ENCODE measurements at regions of chr16 and their contacts with region 1.

Region 1: GRCh38 chr16:13587176-13587575 is 332.8 kb upstream of the ERCC4 start:
- DNase-seq: no peak
- ATAC-seq: no peak
- H3K4me3 ChIP-seq: no peak overlapping the region
- H3K27ac ChIP-seq: no peak overlapping the region
- H3K4me1 ChIP-seq: no peaks in the 10 kb centered on the region
- H3K27me3 ChIP-seq: no peaks in the 10 kb centered on the region; the same call in 1 of the 2 replicates
- CTCF ChIP-seq: no peak

Region 2: DNA sequence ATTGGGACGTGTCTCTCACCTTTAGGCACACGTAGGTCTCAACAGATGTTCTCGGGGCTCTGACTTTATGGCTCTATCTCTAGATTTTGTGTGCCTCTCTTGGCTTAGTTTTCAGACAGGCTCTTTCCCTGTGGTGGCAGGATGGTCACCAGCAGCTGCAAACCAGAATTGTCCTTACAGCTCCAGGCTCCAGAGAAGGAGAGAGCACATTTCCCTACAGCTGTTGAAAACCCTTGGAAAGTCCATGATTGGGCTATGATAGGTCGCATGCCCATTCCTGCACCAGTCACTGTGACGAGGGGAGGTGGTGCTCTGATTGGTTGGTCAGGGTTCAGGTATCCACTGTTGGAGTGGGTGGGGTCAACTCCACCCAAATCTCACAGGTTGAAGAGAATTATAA is 644.3 kb before region 1 on chr16:
- CTCF ChIA-PET with region 1: no interaction called
- POLR2A ChIA-PET with region 1: interaction called, 16 read pairs
- in situ Hi-C with region 1: no loop called
- intact Hi-C with region 1: no loop called
- DNase-seq: no peak
- ATAC-seq: no peak
- H3K4me3 ChIP-seq: no peak overlapping the region
- H3K27ac ChIP-seq: no peak overlapping the region
- H3K4me1 ChIP-seq: no peaks in the 10 kb centered on the region
- H3K27me3 ChIP-seq: no peaks in the 10 kb centered on the region
- CTCF ChIP-seq: no peak